ENCODE measurements at regions of chr5 and their contacts with region 1.

Region 1: GRCh38 chr5:75729321-75729720 is 12.1 kb upstream of the POC5 start:
- DNase-seq: no peak
- H3K4me3 ChIP-seq: no peak overlapping the region
- H3K27ac ChIP-seq: no peak overlapping the region
- H3K4me1 ChIP-seq: no peaks in the 10 kb centered on the region
- H3K27me3 ChIP-seq: no peaks in the 10 kb centered on the region
- CTCF ChIP-seq: no peak
- POLR2A ChIP-seq: no peak

Region 2: DNA sequence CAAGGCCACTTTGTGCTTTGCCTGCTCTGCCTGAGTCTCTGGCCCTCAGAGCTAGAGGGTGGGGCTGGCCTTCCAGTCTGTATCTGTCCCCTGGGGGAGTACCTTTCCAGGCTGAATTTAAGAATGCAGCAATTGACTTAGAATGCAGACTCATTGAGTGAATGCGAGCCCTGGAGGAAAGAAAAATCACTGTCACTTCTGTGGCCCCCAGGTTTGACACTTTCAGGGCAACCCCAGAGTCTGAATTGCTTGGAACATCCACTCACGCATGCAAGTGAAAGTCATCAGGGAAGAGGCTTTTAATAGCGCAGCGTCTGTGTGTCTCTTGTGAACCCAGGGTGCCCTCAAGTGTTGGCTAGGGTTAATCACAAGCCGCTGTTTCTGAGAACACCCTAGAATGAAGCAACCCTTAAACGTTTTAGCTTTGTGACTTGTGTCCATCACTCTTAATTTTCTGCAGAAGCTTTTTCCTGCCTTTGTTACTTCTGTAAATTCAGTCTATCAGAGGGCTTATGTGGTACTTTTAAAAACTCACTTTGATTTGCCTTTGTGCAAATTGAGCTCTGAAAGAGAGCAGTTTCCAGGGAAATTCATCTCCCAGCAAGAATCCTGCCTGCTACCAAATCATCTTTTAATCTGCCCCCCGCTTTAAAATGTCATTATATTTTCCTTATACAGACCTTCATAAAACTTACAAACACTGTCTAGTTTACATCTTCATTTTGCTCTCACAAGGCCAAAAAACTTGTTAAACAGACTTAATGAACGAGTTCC is 527.0 kb after region 1 on chr5:
- intact Hi-C with region 1: loop called (anchors 10 kb)
- DNase-seq: peak; percentile 62 to 65
- H3K4me3 ChIP-seq: no peak overlapping the region
- H3K27ac ChIP-seq: no peak overlapping the region
- H3K4me1 ChIP-seq: peaks cover 0 to 8% of the 10 kb centered on the region in 2 donors
- H3K27me3 ChIP-seq: no peaks in the 10 kb centered on the region
- CTCF ChIP-seq: peak in 5 of 6 experiments; percentile 19 to 76 (median 70)
- POLR2A ChIP-seq: no peak

Measured in thyroid gland (tissue), 4 donors.